GM10248 (cell line): ENCODE measurements at regions of chr12 and their contacts with region 1.

Region 1: GRCh38 chr12:78938341-78939084 is 73.9 kb downstream of the SYT1 start:
- DNase-seq: no peak
- CTCF ChIP-seq: no peak

Region 2: DNA sequence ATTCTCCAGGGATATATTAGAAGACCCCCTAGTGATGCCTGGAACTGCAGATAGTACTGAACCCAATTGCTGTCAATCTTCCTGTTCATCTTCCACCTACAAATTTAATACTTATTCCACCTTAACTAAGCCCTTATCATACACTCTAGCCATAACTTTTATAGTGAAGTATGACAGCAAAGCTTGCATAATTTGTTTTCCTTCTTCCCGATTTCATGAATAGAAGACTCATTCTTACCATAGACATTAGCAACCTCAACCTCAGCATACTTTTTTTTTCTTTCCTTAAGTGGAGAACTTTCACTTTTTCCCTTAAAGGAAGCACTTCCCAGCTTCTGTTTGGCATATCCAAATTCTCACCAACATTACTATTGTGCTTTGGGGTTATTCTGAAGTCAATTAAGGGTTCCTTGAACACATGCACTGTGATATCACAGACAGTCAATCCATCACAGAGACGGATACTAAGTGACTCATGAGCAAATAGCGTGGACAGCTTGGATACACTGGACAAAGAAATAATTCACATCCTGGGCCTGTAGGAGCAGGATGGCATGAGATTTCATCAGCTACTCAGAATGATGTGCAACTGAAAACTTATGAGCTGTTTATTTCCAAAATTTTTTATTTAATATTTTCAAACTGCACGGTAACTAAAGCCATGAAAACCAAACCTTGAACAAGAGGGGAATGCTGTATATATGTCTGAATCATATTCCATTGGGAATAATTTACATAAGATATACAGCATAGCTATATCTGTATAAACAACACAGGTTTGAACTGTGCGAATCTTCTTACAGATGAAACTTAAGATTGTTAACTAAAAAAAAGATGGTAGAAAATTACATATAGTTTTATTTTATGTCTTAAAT is 10.1 kb before region 1 on chr12:
- CTCF ChIA-PET with region 1: interaction called, 12 read pairs
- POLR2A ChIA-PET with region 1: no interaction called
- DNase-seq: no peak
- CTCF ChIP-seq: no peak

Region 3: DNA sequence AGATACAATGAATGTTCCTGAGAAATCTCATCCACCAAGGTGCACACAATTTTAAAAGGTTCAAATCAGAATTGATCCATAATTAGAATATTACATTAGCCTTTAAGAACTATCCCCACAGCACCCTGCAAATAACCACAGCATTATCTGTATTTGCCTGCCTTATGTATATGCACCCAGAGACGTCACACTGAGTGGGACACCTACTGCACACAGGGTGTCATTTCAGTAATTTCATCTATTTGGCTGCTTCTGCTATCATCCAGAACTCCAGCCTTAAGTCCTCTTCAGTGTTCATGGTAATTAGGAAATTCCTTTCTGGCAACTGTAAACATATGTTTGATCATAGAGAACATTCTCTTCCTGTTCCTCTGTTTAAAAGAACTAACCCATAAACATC is 224.4 kb after region 1 on chr12:
- CTCF ChIA-PET with region 1: no interaction called
- POLR2A ChIA-PET with region 1: no interaction called
- DNase-seq: no peak
- CTCF ChIP-seq: no peak